ENCODE measurements at regions of chr18 and their contacts with region 1.

Region 1: DNA sequence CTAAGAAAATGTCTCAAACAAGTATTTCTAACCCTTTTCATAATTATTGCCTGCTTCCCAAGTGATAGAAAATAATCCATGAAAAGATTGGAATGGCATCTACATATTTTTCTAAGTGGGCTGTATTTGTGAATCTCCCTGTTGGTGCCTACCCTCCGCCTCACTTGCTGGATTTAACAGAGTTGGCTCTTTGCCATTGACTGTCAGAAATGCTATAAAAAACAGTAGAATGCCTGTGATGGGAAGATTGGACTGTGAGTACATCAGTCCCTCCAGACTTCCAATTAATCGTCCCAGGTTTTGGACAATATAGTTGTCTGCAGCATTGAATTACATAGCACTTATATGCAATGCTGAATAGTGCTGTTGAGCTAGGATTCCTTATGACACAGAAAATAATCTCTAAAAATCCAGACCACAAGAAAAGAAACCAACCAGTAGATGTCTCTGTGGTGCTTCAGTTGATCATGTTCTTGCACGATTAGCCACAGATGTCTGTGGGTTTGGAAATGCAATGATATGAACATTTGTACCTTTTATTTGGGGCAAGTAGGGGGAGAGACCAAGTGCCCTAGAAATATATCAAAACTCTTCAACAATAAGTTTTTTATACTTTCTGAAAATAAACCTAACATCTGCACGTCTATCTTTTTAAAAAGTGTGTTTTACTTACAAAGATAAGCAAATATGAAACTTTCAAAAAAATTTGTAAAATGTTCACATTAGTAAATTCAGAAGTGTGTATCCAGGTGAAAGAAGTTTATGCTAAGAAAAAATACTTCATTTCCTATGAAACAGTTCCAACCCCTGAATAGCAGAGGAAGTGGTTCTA is 88.5 kb downstream of the DYNAP start:
- DNase-seq: peak; percentile 82
- H3K4me3 Mint-ChIP-seq: no peak overlapping the region
- H3K27ac Mint-ChIP-seq: no peak overlapping the region
- H3K4me1 Mint-ChIP-seq: peaks cover 7% of the 10 kb centered on the region
- H3K27me3 Mint-ChIP-seq: no peaks in the 10 kb centered on the region
- CTCF ChIP-seq: peak; percentile 66

Region 2: GRCh38 chr18:54906331-54907185 is 227.0 kb after region 1 on chr18:
- CTCF ChIA-PET with region 1: interaction called, 3 read pairs
- POLR2A ChIA-PET with region 1: no interaction called
- intact Hi-C with region 1: loop called (anchors 5 kb)
- DNase-seq: no peak
- H3K4me3 Mint-ChIP-seq: no peak overlapping the region
- H3K27ac Mint-ChIP-seq: no peak overlapping the region
- H3K4me1 Mint-ChIP-seq: no peaks in the 10 kb centered on the region
- H3K27me3 Mint-ChIP-seq: no peaks in the 10 kb centered on the region
- CTCF ChIP-seq: no peak

Region 3: DNA sequence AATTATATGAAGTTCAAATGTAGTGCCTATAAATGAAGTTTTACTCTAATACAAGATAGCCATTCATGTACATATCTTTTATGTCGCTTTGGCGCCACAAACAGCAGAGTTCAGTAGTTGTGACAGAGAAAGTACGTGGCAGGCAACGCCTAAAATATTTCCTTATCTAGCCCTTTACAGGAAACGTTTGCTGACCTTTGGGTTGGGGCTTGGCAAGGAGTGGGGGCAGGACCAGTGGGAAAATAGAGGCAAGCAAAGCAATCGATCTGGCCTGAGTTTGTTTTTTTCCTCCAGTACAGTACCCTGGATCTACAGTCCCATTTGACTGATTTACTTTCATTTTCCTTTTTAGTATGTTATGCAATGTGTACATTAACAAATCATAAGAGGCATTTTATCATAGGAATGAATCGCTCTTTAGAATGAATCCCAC is 266.6 kb after region 1 on chr18:
- CTCF ChIA-PET with region 1: interaction called, 60 read pairs
- POLR2A ChIA-PET with region 1: interaction called, 5 read pairs
- intact Hi-C with region 1: loop called (anchors 1 kb)
- DNase-seq: peak; percentile 56
- H3K4me3 Mint-ChIP-seq: peak overlapping the region; percentile 77
- H3K27ac Mint-ChIP-seq: peak overlapping the region; percentile 95
- H3K4me1 Mint-ChIP-seq: peaks cover 9% of the 10 kb centered on the region
- H3K27me3 Mint-ChIP-seq: no peaks in the 10 kb centered on the region
- CTCF ChIP-seq: no peak

Region 4: DNA sequence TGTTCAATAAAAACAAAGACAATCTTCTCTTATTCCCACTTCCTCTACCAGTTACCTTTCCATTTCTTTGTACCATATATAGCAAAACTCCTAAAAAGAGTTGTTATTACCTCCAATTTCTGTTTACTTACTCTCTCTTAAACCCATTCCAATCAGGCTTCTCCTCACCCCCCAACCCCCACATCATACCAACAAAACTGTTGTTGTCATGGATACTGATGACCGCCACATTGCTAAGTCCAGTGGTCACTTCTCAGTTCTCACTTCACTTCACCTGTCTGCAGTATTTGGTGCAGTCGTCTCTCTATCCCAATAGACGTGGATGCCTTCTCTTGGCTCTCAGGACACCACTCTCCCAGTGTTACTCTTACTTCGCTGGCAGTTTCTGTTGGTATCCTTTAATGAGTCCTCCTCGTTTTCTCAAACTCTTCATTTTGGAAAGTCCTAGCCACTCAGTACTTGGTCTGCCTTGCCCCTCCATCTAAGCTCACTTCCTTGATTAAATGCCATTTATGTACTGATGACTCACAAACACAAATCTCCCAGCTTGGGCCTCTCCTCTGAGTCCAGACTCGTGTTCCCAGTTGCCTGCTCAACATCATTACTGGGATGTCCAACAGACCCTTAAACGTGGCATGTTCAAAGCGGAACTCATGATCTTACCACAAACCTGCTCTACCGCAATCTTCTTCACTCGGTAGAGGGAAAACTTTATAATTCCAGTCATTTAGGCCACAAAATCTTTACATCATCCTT is 293.3 kb after region 1 on chr18:
- CTCF ChIA-PET with region 1: interaction called, 19 read pairs
- POLR2A ChIA-PET with region 1: interaction called, 3 read pairs
- intact Hi-C with region 1: no loop called
- DNase-seq: no peak
- H3K4me3 Mint-ChIP-seq: no peak overlapping the region
- H3K27ac Mint-ChIP-seq: no peak overlapping the region
- H3K4me1 Mint-ChIP-seq: no peaks in the 10 kb centered on the region
- H3K27me3 Mint-ChIP-seq: no peaks in the 10 kb centered on the region
- CTCF ChIP-seq: no peak

Measured in MCF 10A (cell line).